Right ventricle myocardium inferior (tissue), 1 donor: ENCODE measurements at regions of chr4 and their contacts with region 1.

Region 1: GRCh38 chr4:46931981-46932380 is 22.9 kb upstream of the COX7B2 start:
- DNase-seq: no peak
- ATAC-seq: peak; percentile 69

Region 2: GRCh38 chr4:46656071-46656470 is 275.9 kb before region 1 on chr4:
- intact Hi-C with region 1: no loop called
- DNase-seq: no peak
- ATAC-seq: no peak

Region 3: DNA sequence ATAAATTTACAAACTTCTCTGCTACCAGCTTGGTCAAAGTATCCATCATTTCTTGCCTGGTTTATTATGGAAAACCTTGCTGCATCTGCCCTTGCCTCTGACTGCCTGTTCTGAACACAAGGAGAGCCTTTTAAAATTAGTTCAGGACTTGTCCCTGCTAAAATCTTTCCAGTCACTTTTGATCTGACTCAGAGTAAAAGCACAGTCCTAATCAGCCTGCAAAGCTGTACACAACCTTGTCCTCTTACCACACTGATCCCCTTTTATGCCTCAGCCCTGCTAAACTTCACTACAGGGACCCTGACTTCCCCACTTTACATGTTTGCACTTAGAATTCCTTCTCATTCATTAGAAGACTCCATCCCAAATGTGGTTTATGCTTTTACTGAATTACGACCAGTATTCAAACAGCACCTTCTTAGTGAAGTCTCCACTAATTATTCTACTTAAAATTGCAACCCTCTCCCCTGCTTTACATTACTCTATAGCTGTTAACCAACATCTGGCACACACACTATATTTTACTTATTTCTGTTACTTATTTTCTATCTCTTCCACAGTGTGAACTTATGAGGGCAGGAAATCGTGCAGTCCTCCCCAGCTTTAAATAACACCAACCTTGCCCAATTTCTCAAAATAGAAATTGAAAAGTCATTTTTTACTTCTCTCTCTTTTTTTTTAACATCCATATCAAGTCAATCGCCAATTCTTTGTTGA is 55.1 kb after region 1 on chr4:
- intact Hi-C with region 1: no loop called
- DNase-seq: no peak
- ATAC-seq: no peak

Region 4: DNA sequence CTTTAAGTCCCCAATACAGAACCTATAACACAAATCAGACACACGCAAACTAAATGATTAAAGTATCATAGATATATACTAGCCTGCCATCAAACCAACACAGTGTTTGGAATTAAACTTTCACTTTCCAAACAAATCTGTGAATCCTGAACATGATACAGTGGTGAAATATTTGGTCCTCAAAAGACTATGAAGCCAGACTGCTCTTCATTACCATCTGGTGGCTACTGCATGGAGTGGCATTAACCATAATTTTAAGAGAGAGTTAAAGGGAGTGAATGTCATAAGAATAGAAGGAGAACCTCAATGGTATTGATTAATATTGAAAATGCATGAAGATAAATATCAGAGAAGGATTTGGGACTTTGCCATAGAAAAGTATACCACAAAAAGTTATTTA is 70.6 kb after region 1 on chr4:
- intact Hi-C with region 1: loop called (anchors 2 kb)
- DNase-seq: no peak
- ATAC-seq: no peak

Region 5: DNA sequence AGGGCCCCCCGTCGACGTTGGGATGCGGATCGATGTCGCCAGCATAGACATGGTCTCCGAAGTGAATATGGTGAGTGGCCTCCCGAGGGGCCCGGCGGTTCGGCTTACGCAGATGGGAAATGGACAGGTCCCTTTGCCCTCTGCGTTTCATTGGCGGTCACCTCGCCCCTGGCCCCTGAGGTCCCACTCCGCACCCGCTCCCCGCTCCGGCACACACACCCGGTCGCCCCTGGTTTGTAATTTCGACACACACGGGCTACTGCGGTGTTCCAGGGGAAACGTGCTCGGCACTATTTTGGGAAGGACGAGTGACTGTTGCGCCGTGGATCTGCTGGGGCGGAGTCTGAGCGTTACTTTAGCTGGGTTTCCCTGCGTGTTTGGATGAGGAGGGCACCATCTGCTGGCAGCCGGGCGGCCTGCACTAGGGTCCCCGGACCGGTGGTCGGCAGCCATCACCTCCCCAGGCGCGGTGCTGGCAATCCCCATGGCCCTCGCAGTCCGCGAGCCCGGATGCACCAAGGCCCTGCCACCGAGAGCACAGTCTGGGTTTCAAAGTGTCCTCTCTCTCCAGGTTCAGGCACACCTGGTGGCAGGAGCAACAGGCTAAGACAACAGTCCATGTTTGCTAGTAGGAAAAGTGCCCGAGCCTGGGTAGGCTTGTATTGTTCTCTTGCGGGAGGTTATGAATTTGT is 100.6 kb after region 1 on chr4:
- intact Hi-C with region 1: loop called (anchors 1 kb)
- DNase-seq: no peak
- ATAC-seq: peak; percentile 92

Region 6: DNA sequence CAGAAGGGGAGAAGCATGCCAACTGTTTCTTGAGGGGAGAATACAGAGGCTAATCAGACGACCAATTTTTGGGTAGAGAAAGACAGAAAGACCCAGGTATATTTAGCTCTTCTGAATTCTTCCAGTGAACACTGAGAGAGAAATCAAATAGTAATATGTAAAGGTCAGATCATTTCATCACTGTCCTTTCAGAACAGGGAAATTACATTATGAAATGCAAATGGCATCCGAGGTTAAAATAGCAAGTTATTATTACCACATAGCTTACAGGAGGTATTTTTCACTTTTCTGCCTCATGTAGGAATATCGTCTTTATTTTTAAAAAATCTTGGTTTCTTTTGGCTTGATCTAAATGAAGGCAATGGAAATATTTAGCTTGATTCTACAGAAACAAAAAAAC is 117.4 kb after region 1 on chr4:
- intact Hi-C with region 1: no loop called
- DNase-seq: no peak
- ATAC-seq: no peak